GM12878 (cell line): ENCODE measurements at regions of chr15 and their contacts with region 1.

Region 1: DNA sequence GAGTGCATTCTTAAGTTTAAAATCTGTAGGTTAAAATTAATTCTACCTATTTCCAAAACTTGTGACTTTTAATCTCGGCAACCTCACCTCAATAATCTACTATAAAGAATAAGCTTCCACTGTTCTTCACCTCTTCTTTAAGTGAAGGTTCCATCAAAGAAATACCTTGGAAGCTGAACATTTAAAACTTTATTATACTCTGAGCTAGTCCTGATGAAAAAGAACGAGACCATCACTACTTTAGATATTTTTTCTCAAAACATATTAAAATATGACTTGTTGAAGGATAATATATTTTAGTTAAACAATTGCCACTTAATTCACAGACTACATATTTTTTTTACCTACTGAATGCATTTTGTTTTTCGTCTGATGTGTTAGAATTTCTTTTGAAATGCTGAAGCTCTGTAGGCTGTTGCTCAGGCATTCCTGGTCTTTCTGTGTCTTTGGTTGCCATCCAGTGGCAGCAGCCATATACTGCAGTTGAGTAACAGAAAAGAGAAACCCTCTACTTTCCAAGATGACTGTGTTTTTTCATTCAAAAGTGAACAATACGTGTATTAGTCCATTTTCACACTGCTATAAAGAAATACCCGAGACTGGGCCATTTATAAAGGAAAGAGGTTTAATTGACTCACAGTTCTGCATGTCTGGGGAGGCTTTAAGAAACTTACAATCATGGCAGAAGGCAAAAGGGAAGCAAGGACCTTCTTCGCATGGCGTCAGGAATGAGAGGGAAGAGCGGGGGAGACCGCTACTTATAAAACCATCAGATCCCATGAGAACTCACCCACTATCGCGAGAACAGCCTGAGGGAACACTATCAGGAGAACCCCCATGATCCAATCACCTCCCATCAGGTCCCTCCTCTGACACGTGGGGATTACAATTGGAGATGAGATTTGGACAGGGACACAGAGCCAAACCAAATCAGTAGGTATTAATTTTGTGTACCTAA is 4.5 kb upstream of the GOLGA8B start:
- DNase-seq: no peak
- ATAC-seq: peak; percentile 41
- H3K4me3 ChIP-seq: peak overlapping the region; percentile 21; the same call in 1 of the 2 replicates
- H3K27ac ChIP-seq: no peak overlapping the region
- H3K4me1 ChIP-seq: no peaks in the 10 kb centered on the region
- H3K27me3 ChIP-seq: no peaks in the 10 kb centered on the region
- CTCF ChIP-seq: peak; percentile 67 to 88 (median 76)
- EP300 ChIP-seq: no peak
- POLR2A ChIP-seq: peak; percentile 56
- RAD21 ChIP-seq: peak; percentile 93

Region 2: DNA sequence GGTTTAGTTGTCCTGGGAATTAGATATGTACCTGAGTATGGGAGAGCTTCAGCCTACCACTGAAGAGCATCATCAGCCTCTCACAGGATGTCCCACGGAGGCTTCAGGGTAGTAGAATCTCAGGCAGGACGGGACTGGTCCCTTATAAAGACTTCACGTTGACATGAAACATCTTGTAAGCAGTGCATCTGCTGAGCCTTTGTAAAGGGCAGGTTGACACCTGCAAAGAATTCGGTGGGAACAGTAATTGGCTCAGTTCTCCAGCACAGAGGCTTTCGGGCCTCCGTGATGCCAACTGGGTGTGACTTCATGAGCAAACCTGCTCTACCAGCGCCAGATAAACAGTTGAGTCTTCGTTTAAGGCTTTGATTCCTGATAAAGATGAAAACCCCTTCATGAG is 522.1 kb before region 1 on chr15:
- CTCF ChIA-PET with region 1: interaction called, 5 read pairs
- POLR2A ChIA-PET with region 1: no interaction called
- RAD21 ChIA-PET with region 1: interaction called, 10 read pairs
- SMC1A ChIA-PET with region 1: no interaction called
- in situ Hi-C with region 1: loop called (anchors 25 kb)
- intact Hi-C with region 1: loop called (anchors 10 kb)
- DNase-seq: no peak
- ATAC-seq: no peak
- H3K4me3 ChIP-seq: no peak overlapping the region
- H3K27ac ChIP-seq: no peak overlapping the region
- H3K4me1 ChIP-seq: no peaks in the 10 kb centered on the region
- H3K27me3 ChIP-seq: no peaks in the 10 kb centered on the region
- CTCF ChIP-seq: no peak
- EP300 ChIP-seq: no peak
- POLR2A ChIP-seq: no peak
- RAD21 ChIP-seq: no peak

Region 3: DNA sequence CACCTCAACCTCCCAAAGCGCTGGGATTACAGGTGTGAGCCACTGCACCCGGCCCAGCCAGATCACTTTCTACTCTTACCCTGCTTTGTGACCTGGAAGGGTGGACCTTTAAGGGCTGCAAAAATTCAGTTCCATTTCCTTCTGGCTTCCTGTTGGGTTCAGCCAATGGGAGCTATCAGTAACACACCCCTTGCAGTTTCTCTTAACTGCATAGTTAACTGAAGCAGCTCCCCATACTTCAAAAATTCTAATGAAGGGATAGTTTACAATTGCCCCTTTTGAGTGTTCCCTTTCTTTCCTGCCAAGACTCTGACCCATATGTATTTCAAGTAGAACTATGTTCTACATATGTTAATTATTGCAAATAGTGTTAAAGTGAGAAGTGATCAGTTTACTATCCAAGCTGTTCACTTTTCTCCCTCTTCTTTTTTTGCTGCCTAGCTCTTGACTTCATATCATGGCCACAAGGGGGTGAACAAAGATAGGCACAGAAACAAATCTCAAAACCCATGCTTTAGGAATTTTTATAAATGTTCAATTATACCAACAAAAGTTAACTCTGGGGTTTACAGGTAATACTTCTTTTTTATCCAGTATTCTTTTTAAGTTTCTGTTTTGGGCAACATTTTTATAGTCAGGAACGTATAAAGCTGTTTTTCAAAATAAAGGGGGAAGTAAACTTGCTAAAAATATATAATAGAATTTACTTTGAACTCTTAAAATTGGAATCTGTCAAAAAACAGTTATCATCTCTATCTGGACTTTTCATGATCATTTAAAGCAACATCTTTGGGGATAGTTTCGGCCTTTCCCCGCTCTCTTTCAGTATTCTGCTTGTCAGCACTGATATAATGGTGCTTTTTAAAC is 478.0 kb before region 1 on chr15:
- CTCF ChIA-PET with region 1: interaction called, 25 read pairs
- POLR2A ChIA-PET with region 1: no interaction called
- RAD21 ChIA-PET with region 1: interaction called, 14 read pairs
- SMC1A ChIA-PET with region 1: interaction called, 11 read pairs
- in situ Hi-C with region 1: no loop called
- intact Hi-C with region 1: loop called (anchors 10 kb)
- DNase-seq: no peak
- ATAC-seq: peak; percentile 84
- H3K4me3 ChIP-seq: no peak overlapping the region
- H3K27ac ChIP-seq: no peak overlapping the region
- H3K4me1 ChIP-seq: no peaks in the 10 kb centered on the region
- H3K27me3 ChIP-seq: no peaks in the 10 kb centered on the region
- CTCF ChIP-seq: peak; percentile 65 to 73 (median 67)
- EP300 ChIP-seq: no peak
- POLR2A ChIP-seq: no peak
- RAD21 ChIP-seq: peak; percentile 90

Region 4: DNA sequence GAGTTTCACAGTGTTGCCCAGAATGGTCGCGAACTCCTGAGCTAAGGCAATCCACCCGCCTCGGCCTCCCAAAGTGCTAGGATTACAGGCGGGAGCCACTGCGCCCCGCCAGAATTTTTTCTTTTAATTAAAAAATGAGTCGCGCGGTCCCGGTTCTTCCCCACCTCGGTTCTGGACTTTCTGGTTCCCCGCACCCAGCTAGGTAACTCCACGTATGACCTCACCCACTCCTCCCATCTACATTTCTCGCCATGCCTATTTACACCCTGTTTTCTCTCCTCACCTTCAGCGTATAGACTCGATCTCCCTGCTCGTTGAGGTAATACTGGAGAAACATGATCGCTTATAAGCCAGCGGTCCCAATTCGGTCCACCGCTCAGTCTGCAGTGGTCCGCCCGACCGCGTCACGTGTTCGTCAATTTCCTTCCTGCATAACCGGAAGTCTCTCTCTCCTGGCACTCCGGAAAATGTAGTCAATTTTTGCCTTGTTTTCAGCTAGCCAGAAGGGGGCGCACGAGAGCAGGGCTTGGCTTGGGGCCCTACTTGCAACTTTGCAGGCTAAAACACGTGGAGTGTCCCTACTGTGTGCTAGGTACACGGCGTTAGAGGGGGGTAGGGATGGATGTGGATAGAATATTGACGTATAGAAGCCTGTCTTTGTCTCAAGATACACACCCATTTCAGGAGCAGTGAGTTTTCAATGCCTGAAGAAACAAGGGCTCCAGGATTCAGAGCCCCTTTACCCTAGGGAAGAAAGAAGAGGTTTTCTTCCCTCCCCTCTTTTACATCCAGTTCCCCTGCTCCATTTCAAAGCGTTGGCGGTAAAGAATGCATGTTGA is 245.0 kb before region 1 on chr15 and contains the starts of genes NOP10 and NUTM1:
- CTCF ChIA-PET with region 1: interaction called, 16 read pairs
- POLR2A ChIA-PET with region 1: no interaction called
- RAD21 ChIA-PET with region 1: interaction called, 8 read pairs
- SMC1A ChIA-PET with region 1: interaction called, 3 read pairs
- in situ Hi-C with region 1: no loop called
- intact Hi-C with region 1: no loop called
- DNase-seq: peak; percentile 86
- ATAC-seq: peak; percentile 93
- H3K4me3 ChIP-seq: peak within 1 kb of the TSS; percentile 85
- H3K27ac ChIP-seq: peak within 1 kb of the TSS; percentile 75
- H3K4me1 ChIP-seq: peaks cover 8% of the 10 kb centered on the region; the same call in 1 of the 2 replicates
- H3K27me3 ChIP-seq: no peaks in the 10 kb centered on the region
- CTCF ChIP-seq: peak; percentile 96 to 99 (median 97)
- EP300 ChIP-seq: 0 out of 4 replicates have a peak, but pooled peaks have one; percentile 15 to 29
- POLR2A ChIP-seq: peak; percentile 87
- RAD21 ChIP-seq: peak; percentile 91
- polyA plus RNA-seq, gene NOP10: 1,758 to 1,778 TPM
- polyA plus RNA-seq, gene NUTM1: not detected

Region 5: GRCh38 chr15:34514251-34514670 is 73.7 kb before region 1 on chr15:
- CTCF ChIA-PET with region 1: interaction called, 13 read pairs
- POLR2A ChIA-PET with region 1: no interaction called
- RAD21 ChIA-PET with region 1: interaction called, 6 read pairs
- SMC1A ChIA-PET with region 1: interaction called, 3 read pairs
- in situ Hi-C with region 1: no loop called
- intact Hi-C with region 1: no loop called
- DNase-seq: no peak
- ATAC-seq: peak; percentile 76
- H3K4me3 ChIP-seq: peak overlapping the region; percentile 68
- H3K27ac ChIP-seq: no peak overlapping the region
- H3K4me1 ChIP-seq: peaks cover 10% of the 10 kb centered on the region
- H3K27me3 ChIP-seq: peaks cover 0 to 2% of the 10 kb centered on the region in 2 experiments; a peak in 2 of 4 replicates
- CTCF ChIP-seq: 0 out of 6 replicates have a peak, but pooled peaks of 1 of the 3 experiments have one; percentile 2
- EP300 ChIP-seq: no peak
- POLR2A ChIP-seq: 0 out of 2 replicates have a peak, but pooled peaks have one; percentile 29
- RAD21 ChIP-seq: no peak